H1 (cell line): ENCODE measurements at regions of chr1 and their contacts with region 1.

Region 1: GRCh38 chr1:248837794-248838356 is at the start of gene ZNF672:
- DNase-seq: peak; percentile 91 to 95
- H3K4me3 ChIP-seq: peak within 1 kb of the TSS; percentile 78 to 88 (median 84)
- H3K27ac ChIP-seq: peak within 1 kb of the TSS; percentile 77
- H3K4me1 ChIP-seq: peaks cover 0 to 5% (median 2%) of the 10 kb centered on the region in 4 experiments; a peak in 3 of 7 replicates
- H3K27me3 ChIP-seq: peaks cover 0 to 2% (median 0%) of the 10 kb centered on the region in 4 experiments; a peak in 1 of 7 replicates
- CTCF ChIP-seq: no peak; a peak in 1 of 4 replicates
- EP300 ChIP-seq: no peak
- POLR2A ChIP-seq: peak; percentile 71 to 87; a peak in 2 of 3 replicates
- RAD21 ChIP-seq: no peak; a peak in 1 of 4 replicates
- total RNA-seq, gene ZNF672: 28.4 and 30.7 TPM in 2 replicates

Region 2: DNA sequence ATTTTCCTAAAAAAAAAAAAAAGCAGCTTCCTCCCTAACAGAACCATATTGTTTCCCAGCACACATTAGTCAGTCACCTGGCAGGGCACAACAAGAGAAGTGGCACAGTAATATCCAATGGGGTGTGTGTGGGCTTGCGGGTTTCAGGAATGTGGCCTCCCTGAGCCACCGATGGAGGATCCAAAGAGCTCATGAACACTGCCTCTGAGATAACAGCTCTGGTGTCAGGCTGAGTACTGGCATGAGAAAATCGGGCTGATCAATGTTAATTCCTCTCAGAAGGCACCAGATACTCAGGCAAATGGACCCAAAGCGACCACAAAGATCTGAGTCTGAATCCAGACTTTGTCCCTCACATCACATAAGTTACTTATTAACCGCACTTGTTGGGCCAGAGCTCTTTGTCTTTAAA is 80.1 kb before region 1 on chr1:
- CTCF ChIA-PET with region 1: no interaction called
- POLR2A ChIA-PET with region 1: no interaction called
- DNase-seq: no peak
- H3K4me3 ChIP-seq: no peak overlapping the region
- H3K27ac ChIP-seq: no peak overlapping the region
- H3K4me1 ChIP-seq: no peaks in the 10 kb centered on the region
- H3K27me3 ChIP-seq: no peaks in the 10 kb centered on the region; a peak in 1 of 7 replicates
- CTCF ChIP-seq: no peak
- EP300 ChIP-seq: no peak
- POLR2A ChIP-seq: no peak
- RAD21 ChIP-seq: no peak

Region 3: GRCh38 chr1:248786156-248786555 is 51.7 kb before region 1 on chr1:
- CTCF ChIA-PET with region 1: no interaction called
- POLR2A ChIA-PET with region 1: no interaction called
- DNase-seq: no peak
- H3K4me3 ChIP-seq: no peak overlapping the region
- H3K27ac ChIP-seq: no peak overlapping the region
- H3K4me1 ChIP-seq: no peaks in the 10 kb centered on the region
- H3K27me3 ChIP-seq: no peaks in the 10 kb centered on the region
- CTCF ChIP-seq: no peak
- EP300 ChIP-seq: no peak
- POLR2A ChIP-seq: no peak
- RAD21 ChIP-seq: no peak

Region 4: DNA sequence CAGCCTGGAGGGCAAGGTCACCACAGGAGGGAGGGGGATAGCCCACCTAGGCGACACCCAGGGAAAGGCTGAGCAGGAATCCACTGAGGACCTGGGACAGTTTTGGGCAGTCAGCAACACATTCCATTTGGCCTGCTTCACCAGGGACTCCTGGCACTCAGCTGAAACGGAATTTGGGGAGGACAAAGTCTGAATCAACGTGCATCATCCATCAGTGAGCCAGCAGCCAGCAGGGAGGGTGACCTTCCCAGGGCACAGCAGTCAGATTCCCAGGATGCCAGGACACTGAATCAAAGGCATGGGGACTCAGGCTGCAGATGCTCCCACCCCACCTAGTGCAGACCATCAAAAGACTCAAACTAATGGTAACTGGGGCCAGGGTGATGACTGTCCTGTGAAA is 16.8 kb before region 1 on chr1:
- CTCF ChIA-PET with region 1: interaction called, 20 read pairs
- POLR2A ChIA-PET with region 1: interaction called, 69 read pairs
- DNase-seq: no peak
- H3K4me3 ChIP-seq: no peak overlapping the region
- H3K27ac ChIP-seq: no peak overlapping the region
- H3K4me1 ChIP-seq: peaks cover 0 to 5% (median 3%) of the 10 kb centered on the region in 4 experiments; a peak in 6 of 7 replicates
- H3K27me3 ChIP-seq: no peaks in the 10 kb centered on the region
- CTCF ChIP-seq: no peak
- EP300 ChIP-seq: no peak
- POLR2A ChIP-seq: no peak
- RAD21 ChIP-seq: no peak

Region 5: GRCh38 chr1:248852481-248853405 is 14.9 kb after region 1 on chr1:
- CTCF ChIA-PET with region 1: interaction called, 58 read pairs
- POLR2A ChIA-PET with region 1: interaction called, 47 read pairs
- DNase-seq: no peak
- H3K4me3 ChIP-seq: no peak overlapping the region
- H3K27ac ChIP-seq: no peak overlapping the region
- H3K4me1 ChIP-seq: peaks cover 0 to 7% (median 6%) of the 10 kb centered on the region in 4 experiments; a peak in 6 of 7 replicates
- H3K27me3 ChIP-seq: no peaks in the 10 kb centered on the region
- CTCF ChIP-seq: no peak
- EP300 ChIP-seq: no peak
- POLR2A ChIP-seq: no peak
- RAD21 ChIP-seq: no peak

Region 6: GRCh38 chr1:248873409-248873992 is 35.6 kb after region 1 on chr1:
- CTCF ChIA-PET with region 1: interaction called, 32 read pairs
- POLR2A ChIA-PET with region 1: interaction called, 15 read pairs
- DNase-seq: peak; percentile 93 to 100
- H3K4me3 ChIP-seq: peak overlapping the region; percentile 85 to 94 (median 90)
- H3K27ac ChIP-seq: peak overlapping the region; percentile 62; the same call in 1 of the 2 replicates
- H3K4me1 ChIP-seq: peaks cover 0 to 2% (median 0%) of the 10 kb centered on the region in 4 experiments; a peak in 1 of 7 replicates
- H3K27me3 ChIP-seq: no peaks in the 10 kb centered on the region
- CTCF ChIP-seq: no peak
- EP300 ChIP-seq: no peak
- POLR2A ChIP-seq: no peak
- RAD21 ChIP-seq: peak in 1 of 2 experiments; percentile 1; a peak in 1 of 4 replicates

Region 7: DNA sequence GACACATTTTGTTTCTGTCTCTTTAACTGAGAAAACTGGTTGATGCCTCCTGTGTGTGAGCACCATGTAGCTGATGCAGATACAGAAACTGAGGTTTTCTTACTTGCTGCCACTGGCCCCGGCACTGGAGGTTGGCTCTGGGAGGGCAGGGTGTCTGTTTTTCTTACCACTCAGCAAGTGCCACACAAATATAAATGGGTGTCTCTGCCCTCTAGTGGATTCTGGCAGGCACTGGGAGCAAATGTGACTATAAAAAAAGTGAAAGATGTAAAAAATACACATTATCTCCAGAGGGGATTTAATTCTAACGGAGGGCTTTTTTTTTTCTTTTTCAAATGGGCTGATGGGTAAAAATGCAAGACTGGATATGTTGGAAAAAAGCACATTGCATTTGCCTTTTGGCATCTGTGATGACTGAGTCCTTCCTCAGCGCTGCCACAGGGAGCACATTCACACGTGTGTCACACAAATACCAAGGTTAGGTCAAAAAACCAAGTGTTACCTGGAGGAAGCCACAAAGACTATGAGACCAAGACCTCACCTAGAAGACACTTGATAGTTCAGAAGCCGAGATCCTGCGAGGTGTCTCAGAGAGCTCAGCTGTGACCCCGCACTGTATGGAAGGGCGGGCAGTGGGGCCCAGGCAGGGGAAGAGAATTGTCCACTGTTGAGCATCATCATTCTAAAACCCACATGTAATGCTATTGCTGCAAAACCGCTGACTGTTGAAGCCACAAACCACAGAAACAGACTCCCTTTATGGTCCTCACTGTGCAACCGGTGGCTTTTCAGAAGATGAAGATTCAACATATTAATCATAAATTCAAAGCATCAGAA is 87.0 kb after region 1 on chr1:
- CTCF ChIA-PET with region 1: interaction called, 21 read pairs
- POLR2A ChIA-PET with region 1: no interaction called
- DNase-seq: no peak
- H3K4me3 ChIP-seq: no peak overlapping the region
- H3K27ac ChIP-seq: no peak overlapping the region
- H3K4me1 ChIP-seq: no peaks in the 10 kb centered on the region
- H3K27me3 ChIP-seq: no peaks in the 10 kb centered on the region
- CTCF ChIP-seq: peak in 2 of 3 experiments; percentile 47 to 67; a peak in 3 of 4 replicates
- EP300 ChIP-seq: no peak
- POLR2A ChIP-seq: no peak
- RAD21 ChIP-seq: peak; percentile 71 to 79